MCF 10A (cell line): ENCODE measurements at regions of chr6 and their contacts with region 1.

Region 1: GRCh38 chr6:144284783-144285547 is at the start of gene UTRN:
- DNase-seq: peak; percentile 89
- H3K4me3 Mint-ChIP-seq: peak within 1 kb of the TSS; percentile 97
- H3K27ac Mint-ChIP-seq: peak within 1 kb of the TSS; percentile 74
- H3K4me1 Mint-ChIP-seq: peaks cover 16% of the 10 kb centered on the region
- H3K27me3 Mint-ChIP-seq: no peaks in the 10 kb centered on the region
- CTCF ChIP-seq: no peak
- total RNA-seq, gene UTRN: 78.7 and 84.8 TPM in 2 replicates

Region 2: GRCh38 chr6:144095331-144096002 is 189.5 kb before region 1 on chr6 and contains the start of gene SF3B5:
- CTCF ChIA-PET with region 1: no interaction called
- POLR2A ChIA-PET with region 1: interaction called, 12 read pairs
- intact Hi-C with region 1: no loop called
- DNase-seq: peak; percentile 100
- H3K4me3 Mint-ChIP-seq: peak within 1 kb of the TSS; percentile 96
- H3K27ac Mint-ChIP-seq: peak within 1 kb of the TSS; percentile 96
- H3K4me1 Mint-ChIP-seq: peaks cover 15% of the 10 kb centered on the region
- H3K27me3 Mint-ChIP-seq: no peaks in the 10 kb centered on the region
- CTCF ChIP-seq: no peak
- total RNA-seq, gene SF3B5: 211 and 298 TPM in 2 replicates

Region 3: DNA sequence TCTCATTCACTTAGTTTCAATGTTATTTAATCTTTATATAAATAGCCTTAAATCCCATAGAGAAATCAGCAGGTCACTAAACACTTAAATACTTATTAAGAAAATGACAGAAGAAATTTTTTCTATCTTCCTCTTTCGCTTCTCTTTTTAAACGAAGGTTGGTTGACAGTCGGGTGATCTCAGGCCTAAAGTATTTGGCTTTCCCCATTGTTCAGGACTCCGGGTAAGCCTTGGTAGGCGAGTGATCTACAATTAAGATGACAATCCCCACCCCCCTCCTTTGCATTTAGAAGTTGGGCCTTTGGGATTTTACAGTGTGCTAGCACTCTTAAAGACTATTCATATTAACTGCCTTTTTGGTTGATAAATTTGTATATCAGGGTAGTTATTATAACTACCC is 19.6 kb before region 1 on chr6:
- CTCF ChIA-PET with region 1: interaction called, 7 read pairs
- POLR2A ChIA-PET with region 1: interaction called, 89 read pairs
- intact Hi-C with region 1: loop called (anchors 1 kb)
- DNase-seq: peak; percentile 84
- H3K4me3 Mint-ChIP-seq: peak overlapping the region; percentile 56
- H3K27ac Mint-ChIP-seq: peak overlapping the region; percentile 85
- H3K4me1 Mint-ChIP-seq: peaks cover 22% of the 10 kb centered on the region
- H3K27me3 Mint-ChIP-seq: no peaks in the 10 kb centered on the region
- CTCF ChIP-seq: no peak

Region 4: GRCh38 chr6:144349690-144350527 is 64.9 kb after region 1 on chr6:
- CTCF ChIA-PET with region 1: no interaction called
- POLR2A ChIA-PET with region 1: interaction called, 24 read pairs
- intact Hi-C with region 1: no loop called
- DNase-seq: peak; percentile 81
- H3K4me3 Mint-ChIP-seq: peak overlapping the region; percentile 7
- H3K27ac Mint-ChIP-seq: peak overlapping the region; percentile 37
- H3K4me1 Mint-ChIP-seq: peaks cover 35% of the 10 kb centered on the region
- H3K27me3 Mint-ChIP-seq: no peaks in the 10 kb centered on the region
- CTCF ChIP-seq: no peak

Region 5: GRCh38 chr6:144434308-144434990 is 149.5 kb after region 1 on chr6:
- CTCF ChIA-PET with region 1: interaction called, 3 read pairs
- POLR2A ChIA-PET with region 1: interaction called, 4 read pairs
- intact Hi-C with region 1: loop called (anchors 5 kb)
- DNase-seq: peak; percentile 55
- H3K4me3 Mint-ChIP-seq: no peak overlapping the region
- H3K27ac Mint-ChIP-seq: no peak overlapping the region
- H3K4me1 Mint-ChIP-seq: peaks cover 11% of the 10 kb centered on the region
- H3K27me3 Mint-ChIP-seq: no peaks in the 10 kb centered on the region
- CTCF ChIP-seq: no peak

Region 6: GRCh38 chr6:145823328-145823944 is 1538.5 kb after region 1 on chr6:
- CTCF ChIA-PET with region 1: no interaction called
- POLR2A ChIA-PET with region 1: no interaction called
- intact Hi-C with region 1: no loop called
- DNase-seq: no peak
- H3K4me3 Mint-ChIP-seq: no peak overlapping the region
- H3K27ac Mint-ChIP-seq: no peak overlapping the region
- H3K4me1 Mint-ChIP-seq: no peaks in the 10 kb centered on the region
- H3K27me3 Mint-ChIP-seq: no peaks in the 10 kb centered on the region
- CTCF ChIP-seq: no peak